Activated T-helper 1 cell treated with anti-CD3 and anti-CD28 coated beads, Interleukin-12 subunit alpha, Interleukin-12 subunit beta, Interleukin-2, Interleukin-4 antibody, amounts not matched to agents 30 ng/mL and 10 ng/mL and 1 ng/mL, durations not matched to agents 14 hours and 24 hours and 36 hours (primary cell): ENCODE measurements at regions of chr11 and their contacts with region 1.

Region 1: DNA sequence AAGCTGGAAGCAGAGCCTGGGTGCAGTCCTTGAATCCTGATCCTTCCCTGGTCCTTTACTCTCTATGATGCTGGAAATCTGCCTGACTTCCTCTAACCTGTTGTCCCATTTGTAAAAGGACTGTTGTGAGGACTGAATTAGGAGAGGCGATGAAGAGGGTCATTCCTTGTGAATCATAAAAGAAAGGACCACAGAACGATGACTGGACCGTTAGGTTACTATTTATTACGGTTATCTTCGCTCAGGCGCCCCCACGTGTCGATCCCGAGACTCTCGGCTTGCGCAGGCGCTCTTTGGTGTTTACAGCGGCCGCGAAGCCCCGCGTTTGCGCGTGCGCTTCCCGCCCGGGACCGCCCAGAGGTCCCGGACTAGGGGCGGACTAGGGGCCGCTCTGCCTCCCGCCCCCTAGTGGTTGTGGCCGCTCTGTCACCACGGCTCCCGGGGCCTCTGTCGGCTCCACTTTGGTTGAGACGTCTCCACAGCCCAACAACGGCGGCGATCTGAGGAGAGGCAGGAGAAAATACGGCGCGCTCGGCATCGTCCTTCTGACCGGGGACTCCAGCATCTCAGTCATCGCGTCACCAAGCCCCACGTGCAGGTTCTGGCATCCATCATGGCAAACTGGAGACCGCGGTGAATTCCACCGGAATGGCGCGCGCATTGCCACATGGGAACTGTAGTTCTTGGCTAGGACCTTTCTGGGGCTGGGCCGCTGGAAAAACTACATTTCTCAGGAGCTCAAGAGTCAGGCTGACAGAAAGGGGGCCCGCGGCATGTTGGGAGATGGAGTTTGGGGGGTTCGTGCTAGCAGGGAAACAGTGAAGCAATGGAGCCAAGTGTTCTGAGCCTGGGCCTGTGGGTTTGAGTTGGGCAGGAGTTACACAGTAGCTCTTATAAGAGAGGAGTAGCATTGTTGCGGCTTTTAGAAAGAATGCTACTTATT is at the start of gene STARD10:
- DNase-seq: peak; percentile 93
- H3K4me3 Mint-ChIP-seq: peak within 1 kb of the TSS; percentile 93
- H3K27ac Mint-ChIP-seq: peak within 1 kb of the TSS; percentile 99
- H3K4me1 Mint-ChIP-seq: peaks cover 35% of the 10 kb centered on the region
- H3K27me3 Mint-ChIP-seq: no peaks in the 10 kb centered on the region
- total RNA-seq, gene STARD10: 19.8 and 23.9 TPM in 2 replicates

Region 2: DNA sequence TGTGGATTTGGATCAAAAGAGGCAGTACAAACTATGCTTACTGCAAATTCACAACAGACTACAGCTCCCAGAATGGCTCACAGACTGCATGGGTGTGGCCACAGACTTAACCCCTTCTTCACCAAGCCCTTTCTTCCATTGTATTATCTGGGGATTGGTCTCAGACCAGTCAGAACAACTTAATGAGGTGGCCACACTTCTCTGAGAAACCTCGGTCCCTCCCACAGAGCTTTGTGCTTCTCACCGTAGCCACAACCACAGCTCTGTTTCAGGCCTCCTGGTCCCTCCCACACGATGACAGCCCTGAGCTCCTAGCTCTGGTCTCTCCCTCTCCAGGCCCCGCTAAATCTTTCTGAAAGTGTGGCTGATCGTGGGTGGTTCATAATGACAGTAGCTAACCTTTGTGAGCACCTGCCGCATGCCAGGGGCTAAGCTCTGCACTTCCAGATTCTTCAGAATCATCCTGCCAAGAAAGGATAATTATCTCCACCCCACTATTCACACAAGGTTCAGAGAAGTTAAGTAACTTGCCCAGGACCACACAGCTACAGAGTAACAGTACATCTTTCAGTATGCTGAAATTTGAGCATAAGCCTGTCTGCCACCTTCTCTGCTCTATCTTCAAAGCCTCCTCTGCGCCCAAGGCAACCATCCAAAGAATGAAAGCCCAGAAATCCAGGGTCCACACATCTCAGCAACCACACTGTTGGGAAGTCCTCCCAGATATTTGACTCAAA is 124.9 kb before region 1 on chr11:
- intact Hi-C with region 1: loop called (anchors 1 kb)
- DNase-seq: peak; percentile 43
- H3K4me3 Mint-ChIP-seq: peak overlapping the region; percentile 52
- H3K27ac Mint-ChIP-seq: peak overlapping the region; percentile 71
- H3K4me1 Mint-ChIP-seq: peaks cover 15% of the 10 kb centered on the region
- H3K27me3 Mint-ChIP-seq: peaks cover 33% of the 10 kb centered on the region

Region 3: DNA sequence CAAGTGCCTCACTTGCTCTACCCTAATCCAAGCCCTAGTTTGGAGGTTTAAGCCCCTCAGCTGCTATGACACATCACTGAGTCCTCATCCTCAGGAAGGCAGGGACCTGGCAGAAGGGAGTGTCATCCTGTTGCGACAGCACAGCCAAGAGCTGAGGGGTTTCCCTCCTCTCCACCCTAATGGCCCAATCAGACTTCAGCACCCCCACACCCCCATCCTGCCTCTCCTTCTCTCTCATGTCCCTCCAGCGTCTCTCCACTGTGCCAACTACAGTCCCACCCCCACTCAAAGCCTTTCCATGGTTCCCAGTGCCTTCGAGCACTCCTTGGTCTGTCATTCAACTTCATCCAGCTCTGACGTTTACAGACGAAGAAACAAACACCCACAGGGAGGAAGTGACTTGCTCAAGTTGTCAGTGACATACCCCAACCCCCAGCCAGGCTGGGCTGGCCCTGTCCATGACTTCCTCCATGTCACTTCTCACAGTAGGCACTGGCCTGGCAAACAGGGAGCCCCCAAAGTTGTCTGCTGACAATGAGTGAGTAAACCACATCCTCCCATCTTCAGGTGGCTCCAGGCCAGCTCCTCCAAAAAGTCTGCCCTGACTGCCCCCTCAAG is 57.1 kb before region 1 on chr11:
- intact Hi-C with region 1: loop called (anchors 1 kb)
- DNase-seq: peak; percentile 64
- H3K4me3 Mint-ChIP-seq: peak overlapping the region; percentile 67
- H3K27ac Mint-ChIP-seq: peak overlapping the region; percentile 99
- H3K4me1 Mint-ChIP-seq: peaks cover 47% of the 10 kb centered on the region
- H3K27me3 Mint-ChIP-seq: no peaks in the 10 kb centered on the region

Region 4: DNA sequence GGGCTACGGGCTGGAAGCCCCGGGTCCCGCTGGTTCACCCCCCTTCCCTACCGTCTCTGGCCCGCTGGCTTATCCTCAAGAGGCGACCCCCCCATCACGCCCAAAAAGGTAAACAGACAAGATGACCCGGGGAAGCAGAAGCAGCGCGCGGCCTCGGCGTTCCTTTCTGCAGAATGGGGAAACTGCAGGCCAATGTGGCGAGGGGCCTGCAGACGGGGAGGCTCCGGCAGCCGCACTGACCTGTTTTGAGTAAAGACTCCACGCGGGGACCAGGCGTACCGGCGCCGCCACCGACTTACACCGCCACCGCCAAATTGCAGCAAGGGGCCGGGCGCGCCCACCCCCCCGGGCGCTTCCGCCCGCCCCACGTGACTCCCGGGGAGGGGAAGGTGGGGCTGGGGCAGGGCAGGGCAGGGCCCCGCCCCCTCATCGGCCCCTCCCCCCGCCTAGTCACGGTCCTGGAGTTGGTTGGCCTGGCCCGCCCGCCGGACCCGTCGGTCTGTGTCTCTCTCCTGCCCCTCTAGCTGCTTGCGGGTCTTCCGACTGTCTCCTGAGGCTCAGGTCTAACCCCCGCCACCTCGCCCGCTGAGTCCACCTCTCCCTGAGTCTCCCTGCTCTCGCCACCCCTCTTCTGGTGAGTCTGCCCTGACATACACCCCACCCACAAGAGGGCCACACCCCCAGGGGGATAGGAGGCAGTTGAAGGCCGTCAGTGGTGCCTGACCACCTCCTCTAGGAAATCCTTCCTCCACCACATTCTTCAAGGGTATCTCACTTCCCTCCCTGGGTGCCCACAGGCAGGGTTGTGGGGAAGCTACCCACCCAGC is 41.4 kb before region 1 on chr11 and contains the start of gene ARAP1:
- intact Hi-C with region 1: loop called (anchors 1 kb)
- DNase-seq: peak; percentile 67
- H3K4me3 Mint-ChIP-seq: peak within 1 kb of the TSS; percentile 91
- H3K27ac Mint-ChIP-seq: peak within 1 kb of the TSS; percentile 91
- H3K4me1 Mint-ChIP-seq: peaks cover 42% of the 10 kb centered on the region
- H3K27me3 Mint-ChIP-seq: no peaks in the 10 kb centered on the region
- total RNA-seq, gene ARAP1: 78.8 and 88.6 TPM in 2 replicates

Region 5: GRCh38 chr11:72781313-72782050 is 12.2 kb before region 1 on chr11:
- intact Hi-C with region 1: loop called (anchors 1 kb)
- DNase-seq: peak; percentile 50
- H3K4me3 Mint-ChIP-seq: peak overlapping the region; percentile 80
- H3K27ac Mint-ChIP-seq: peak overlapping the region; percentile 64
- H3K4me1 Mint-ChIP-seq: peaks cover 25% of the 10 kb centered on the region
- H3K27me3 Mint-ChIP-seq: peaks cover 3% of the 10 kb centered on the region

Region 6: DNA sequence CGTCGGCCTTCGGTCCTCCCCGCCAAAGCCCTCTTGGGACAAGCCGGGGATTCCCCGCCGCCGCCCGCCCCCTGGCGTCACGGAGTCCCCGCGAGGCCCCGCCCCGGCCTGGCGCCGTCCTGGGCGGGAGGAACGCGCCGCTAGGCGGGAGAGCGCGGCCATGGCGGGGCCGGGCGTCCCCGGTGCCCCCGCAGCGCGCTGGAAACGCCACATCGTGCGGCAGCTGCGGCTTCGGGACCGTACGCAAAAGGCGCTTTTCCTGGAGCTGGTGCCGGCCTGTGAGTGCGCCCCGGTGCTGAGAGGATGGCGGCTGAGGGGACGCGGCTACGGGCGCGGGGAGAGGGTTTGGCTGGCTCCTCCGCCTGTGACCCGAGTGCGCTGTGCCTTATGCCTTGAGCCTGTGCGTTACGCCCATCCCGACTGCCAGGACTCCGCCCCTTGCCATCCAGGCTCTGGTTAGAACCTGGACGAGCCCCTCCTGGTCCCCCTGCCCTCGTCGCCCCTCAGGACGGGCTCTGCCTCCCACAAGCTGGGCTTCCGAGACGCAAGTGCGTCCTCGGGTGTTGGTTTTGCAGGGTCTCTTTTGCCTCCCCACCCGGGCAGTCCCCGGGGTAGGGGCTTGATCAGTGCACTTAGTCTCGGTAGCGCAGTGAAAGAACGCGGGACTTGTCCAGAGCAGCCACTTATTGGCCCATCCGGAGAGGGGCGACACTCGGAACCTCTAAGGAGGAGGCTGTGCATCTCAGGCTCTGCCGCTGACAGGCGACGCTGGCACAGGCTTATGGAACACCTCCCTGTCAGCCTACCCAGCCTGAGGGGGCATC is 20.8 kb after region 1 on chr11 and contains the start of gene ATG16L2:
- intact Hi-C with region 1: loop called (anchors 1 kb)
- DNase-seq: peak; percentile 90
- H3K4me3 Mint-ChIP-seq: peak within 1 kb of the TSS; percentile 99
- H3K27ac Mint-ChIP-seq: peak within 1 kb of the TSS; percentile 98
- H3K4me1 Mint-ChIP-seq: peaks cover 54% of the 10 kb centered on the region
- H3K27me3 Mint-ChIP-seq: no peaks in the 10 kb centered on the region
- total RNA-seq, gene ATG16L2: 69.2 and 71.1 TPM in 2 replicates

Region 7: GRCh38 chr11:73760679-73761402 is 967.1 kb after region 1 on chr11 and contains the start of gene RAB6A:
- intact Hi-C with region 1: loop called (anchors 1 kb)
- DNase-seq: peak; percentile 100
- H3K4me3 Mint-ChIP-seq: peak within 1 kb of the TSS; percentile 98
- H3K27ac Mint-ChIP-seq: peak within 1 kb of the TSS; percentile 97
- H3K4me1 Mint-ChIP-seq: peaks cover 41% of the 10 kb centered on the region
- H3K27me3 Mint-ChIP-seq: peaks cover 3% of the 10 kb centered on the region
- total RNA-seq, gene RAB6A: 81.9 and 88.0 TPM in 2 replicates